ENCODE measurements at regions of chr1 and their contacts with region 1.

Region 1: GRCh38 chr1:225480825-225481434 is 53.1 kb upstream of the LBR start:
- DNase-seq: peak; percentile 76
- ATAC-seq: peak; percentile 80
- H3K4me3 Mint-ChIP-seq: no peak overlapping the region
- H3K27ac Mint-ChIP-seq: no peak overlapping the region
- H3K4me1 Mint-ChIP-seq: peaks cover 24% of the 10 kb centered on the region
- H3K27me3 Mint-ChIP-seq: no peaks in the 10 kb centered on the region
- CTCF ChIP-seq: peak; percentile 97

Region 2: GRCh38 chr1:225493591-225494246 is 12.8 kb after region 1 on chr1:
- CTCF ChIA-PET with region 1: interaction called, 14 read pairs
- POLR2A ChIA-PET with region 1: interaction called, 3 read pairs
- intact Hi-C with region 1: no loop called
- DNase-seq: no peak
- ATAC-seq: no peak
- H3K4me3 Mint-ChIP-seq: no peak overlapping the region
- H3K27ac Mint-ChIP-seq: no peak overlapping the region
- H3K4me1 Mint-ChIP-seq: peaks cover 10% of the 10 kb centered on the region
- H3K27me3 Mint-ChIP-seq: peaks cover 1% of the 10 kb centered on the region
- CTCF ChIP-seq: no peak

Region 3: GRCh38 chr1:225508538-225509375 is 27.8 kb after region 1 on chr1:
- CTCF ChIA-PET with region 1: interaction called, 10 read pairs
- POLR2A ChIA-PET with region 1: interaction called, 3 read pairs
- intact Hi-C with region 1: no loop called
- DNase-seq: peak; percentile 6
- ATAC-seq: peak; percentile 56
- H3K4me3 Mint-ChIP-seq: no peak overlapping the region
- H3K27ac Mint-ChIP-seq: no peak overlapping the region
- H3K4me1 Mint-ChIP-seq: peaks cover 4% of the 10 kb centered on the region
- H3K27me3 Mint-ChIP-seq: peaks cover 3% of the 10 kb centered on the region
- CTCF ChIP-seq: no peak

Region 4: GRCh38 chr1:225587310-225587709 is 106.4 kb after region 1 on chr1:
- CTCF ChIA-PET with region 1: no interaction called
- POLR2A ChIA-PET with region 1: no interaction called
- intact Hi-C with region 1: no loop called
- DNase-seq: no peak
- ATAC-seq: no peak
- H3K4me3 Mint-ChIP-seq: no peak overlapping the region
- H3K27ac Mint-ChIP-seq: no peak overlapping the region
- H3K4me1 Mint-ChIP-seq: no peaks in the 10 kb centered on the region
- H3K27me3 Mint-ChIP-seq: peaks cover 10% of the 10 kb centered on the region
- CTCF ChIP-seq: no peak